KBM-7 (cell line): ENCODE measurements at regions of chr16 and their contacts with region 1.

Region 1: DNA sequence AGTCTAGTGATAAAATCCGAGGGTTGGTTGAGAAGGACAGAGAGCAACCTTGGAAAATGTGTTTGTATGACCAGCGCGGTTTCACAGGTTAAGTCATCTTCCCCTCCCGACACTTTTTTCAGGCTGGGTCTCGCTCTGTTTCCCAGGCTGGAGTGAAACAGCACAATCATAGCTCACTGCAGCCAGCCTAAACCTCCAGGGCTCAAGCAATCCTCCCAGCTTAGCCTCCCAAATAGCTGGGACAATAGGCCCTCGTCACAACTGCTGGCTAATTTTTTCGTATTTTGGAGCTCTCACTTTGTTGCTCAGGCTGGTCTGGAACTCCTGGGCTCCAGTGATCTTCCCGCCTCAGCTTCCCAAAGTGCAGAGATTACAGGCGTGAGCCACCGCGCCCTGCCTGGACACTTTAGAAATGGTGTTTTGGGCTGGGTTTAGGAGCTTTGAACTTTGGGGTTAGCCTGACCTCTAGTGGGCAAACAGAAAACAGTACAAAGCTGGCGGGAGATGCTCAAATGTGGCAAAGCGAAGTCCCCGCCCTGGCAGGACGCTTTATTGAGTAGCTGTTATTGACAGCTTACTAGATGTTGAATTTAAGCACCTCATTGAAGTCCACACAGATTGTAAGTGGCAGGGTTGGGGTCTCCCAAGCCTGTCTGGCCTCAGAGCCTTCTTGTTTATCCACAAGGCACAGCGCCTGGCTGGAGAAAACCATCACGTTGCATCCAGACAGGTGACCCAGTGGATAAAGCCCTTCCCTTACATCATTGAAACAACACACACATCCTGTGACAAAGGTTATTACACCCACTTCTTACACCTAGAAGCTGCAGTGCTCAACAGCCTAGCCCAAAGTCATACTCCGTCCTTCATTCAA is 34.7 kb upstream of the RBBP6 start:
- DNase-seq: peak; percentile 79

Region 2: GRCh38 chr16:23729503-23730424 is 774.9 kb before region 1 on chr16:
- in situ Hi-C with region 1: loop called (anchors 25 kb)
- DNase-seq: peak; percentile 48

Region 3: DNA sequence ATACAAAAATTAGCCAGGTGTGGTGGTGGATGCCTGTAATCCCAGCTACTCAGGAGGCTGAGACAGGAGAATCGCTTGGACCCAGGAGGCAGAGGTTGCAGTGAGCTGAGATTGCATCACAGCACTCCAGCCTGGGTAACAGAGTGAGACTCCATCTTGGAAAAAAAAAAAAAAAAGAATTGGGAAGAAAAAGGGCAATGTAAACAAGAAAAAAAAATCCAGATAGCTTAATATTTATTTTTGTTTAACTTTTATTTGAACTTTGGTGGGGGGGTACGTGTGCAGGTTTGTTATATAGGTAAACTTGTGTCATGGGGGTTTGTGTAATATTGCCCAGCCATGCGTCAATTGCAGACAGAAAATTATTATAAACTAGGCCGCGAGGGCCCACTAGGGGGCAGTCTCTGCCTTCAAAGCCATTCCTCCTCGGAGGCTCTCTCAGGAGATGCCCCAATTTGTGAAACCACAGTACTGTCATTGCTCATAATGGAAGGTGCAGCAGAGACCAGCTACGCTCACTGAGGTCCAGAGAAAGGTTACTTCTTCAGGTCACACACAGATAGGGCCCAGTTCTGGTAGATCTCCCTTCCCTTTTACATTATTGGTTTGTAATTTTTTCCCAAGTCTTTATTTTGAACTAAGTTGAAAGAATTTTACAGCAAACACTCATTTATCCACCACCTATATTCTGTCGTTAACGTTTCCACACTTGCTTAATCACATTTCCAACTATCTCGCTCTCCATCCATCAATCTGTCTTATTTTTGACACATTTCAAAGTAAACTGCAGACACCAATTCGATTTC is 462.7 kb before region 1 on chr16:
- in situ Hi-C with region 1: loop called (anchors 10 kb)
- DNase-seq: peak; percentile 83